ENCODE measurements at regions of chr6 and their contacts with region 1.

Region 1: GRCh38 chr6:26312501-26313390 is 52.3 kb upstream of the BTN3A2 start:
- DNase-seq: peak; percentile 91
- H3K4me3 Mint-ChIP-seq: peak overlapping the region; percentile 75
- H3K27ac Mint-ChIP-seq: peak overlapping the region; percentile 98
- H3K4me1 Mint-ChIP-seq: peaks cover 43% of the 10 kb centered on the region
- H3K27me3 Mint-ChIP-seq: no peaks in the 10 kb centered on the region
- CTCF ChIP-seq: no peak

Region 2: DNA sequence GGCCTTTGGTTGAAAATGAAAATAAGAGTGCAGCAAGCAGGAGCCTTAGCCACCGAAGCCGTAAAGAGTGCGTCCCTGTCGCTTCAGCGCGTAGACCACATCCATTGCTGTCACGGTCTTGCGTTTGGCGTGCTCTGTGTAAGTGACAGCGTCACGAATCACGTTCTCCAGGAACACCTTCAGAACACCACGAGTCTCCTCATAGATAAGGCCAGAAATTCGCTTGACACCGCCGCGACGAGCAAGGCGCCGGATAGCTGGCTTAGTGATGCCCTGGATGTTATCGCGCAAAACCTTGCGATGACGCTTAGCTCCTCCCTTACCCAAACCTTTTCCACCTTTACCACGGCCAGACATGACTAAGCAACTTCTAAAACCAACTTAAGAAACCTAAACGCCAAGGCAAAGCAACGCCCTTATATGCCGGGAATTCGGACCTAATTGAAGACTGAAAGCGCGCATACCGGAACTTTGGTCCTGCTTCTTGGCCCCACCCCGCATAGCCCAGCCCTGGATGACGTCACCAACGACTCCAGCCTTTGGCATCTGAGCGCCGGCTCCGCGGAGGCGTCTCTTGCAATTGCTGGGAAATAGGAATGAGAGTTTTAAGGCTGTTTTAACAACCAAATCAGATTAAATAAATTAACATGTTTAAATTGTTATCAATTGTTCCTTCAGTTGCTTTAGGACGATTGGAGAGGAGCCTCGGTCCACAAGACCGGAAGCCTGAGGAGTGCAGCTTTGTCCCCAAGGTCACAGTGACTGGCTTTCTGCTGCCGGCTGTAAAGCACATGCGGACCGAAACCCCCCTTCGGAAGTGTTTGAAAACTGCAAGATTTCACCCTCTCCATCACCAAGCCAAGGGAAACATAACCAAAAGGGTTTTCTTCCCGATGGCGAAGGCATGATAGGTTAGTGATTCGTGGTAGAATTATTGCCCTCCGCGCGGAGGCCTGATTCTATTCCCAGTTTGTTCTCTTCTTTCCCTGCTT is 27.3 kb before region 1 on chr6:
- CTCF ChIA-PET with region 1: no interaction called
- intact Hi-C with region 1: loop called (anchors 2 kb)
- DNase-seq: peak; percentile 99
- H3K4me3 Mint-ChIP-seq: peak overlapping the region; percentile 76
- H3K27ac Mint-ChIP-seq: peak overlapping the region; percentile 98
- H3K4me1 Mint-ChIP-seq: peaks cover 35% of the 10 kb centered on the region
- H3K27me3 Mint-ChIP-seq: no peaks in the 10 kb centered on the region
- CTCF ChIP-seq: no peak

Region 3: GRCh38 chr6:26295691-26296555 is 16.8 kb before region 1 on chr6:
- CTCF ChIA-PET with region 1: interaction called, 13 read pairs
- intact Hi-C with region 1: no loop called
- DNase-seq: peak; percentile 75
- H3K4me3 Mint-ChIP-seq: peak overlapping the region; percentile 64
- H3K27ac Mint-ChIP-seq: peak overlapping the region; percentile 88
- H3K4me1 Mint-ChIP-seq: peaks cover 38% of the 10 kb centered on the region
- H3K27me3 Mint-ChIP-seq: no peaks in the 10 kb centered on the region
- CTCF ChIP-seq: no peak